ENCODE measurements at regions of chr16 and their contacts with region 1.

Region 1: GRCh38 chr16:2009789-2010510 is at the start of gene ZNF598:
- DNase-seq: peak; percentile 56 to 74
- H3K4me3 ChIP-seq: peak within 1 kb of the TSS; percentile 87 to 96 (median 87)
- H3K27ac ChIP-seq: peak within 1 kb of the TSS; percentile 92 to 97
- H3K4me1 ChIP-seq: peaks cover 9 to 24% of the 10 kb centered on the region in 2 donors
- H3K27me3 ChIP-seq: no peaks in the 10 kb centered on the region
- CTCF ChIP-seq: peak in 1 of 3 donors; percentile 6
- POLR2A ChIP-seq: peak; percentile 77
- total RNA-seq, gene ZNF598: 16.0 to 25.2 (median 22.2) TPM

Region 2: GRCh38 chr16:200388-200787 is 1809.6 kb before region 1 on chr16:
- intact Hi-C with region 1: loop called (anchors 5 kb)
- DNase-seq: no peak
- H3K4me3 ChIP-seq: no peak overlapping the region
- H3K27ac ChIP-seq: no peak overlapping the region
- H3K4me1 ChIP-seq: no peaks in the 10 kb centered on the region
- H3K27me3 ChIP-seq: no peaks in the 10 kb centered on the region
- CTCF ChIP-seq: no peak
- POLR2A ChIP-seq: no peak

Region 3: GRCh38 chr16:1533443-1533951 is 476.5 kb before region 1 on chr16 and contains the start of gene TMEM204:
- intact Hi-C with region 1: no loop called
- DNase-seq: peak in 1 of 2 donors; percentile 57
- H3K4me3 ChIP-seq: peak within 1 kb of the TSS; percentile 68 to 91 (median 72)
- H3K27ac ChIP-seq: peak within 1 kb of the TSS; percentile 84 to 97
- H3K4me1 ChIP-seq: peaks cover 17 to 24% of the 10 kb centered on the region in 2 donors
- H3K27me3 ChIP-seq: no peaks in the 10 kb centered on the region
- CTCF ChIP-seq: no peak
- POLR2A ChIP-seq: no peak
- total RNA-seq, gene TMEM204: 27.8 to 37.0 (median 34.1) TPM

Region 4: GRCh38 chr16:1991948-1992703 is 17.8 kb before region 1 on chr16:
- intact Hi-C with region 1: no loop called
- DNase-seq: peak; percentile 87 to 92
- H3K4me3 ChIP-seq: peak overlapping the region; percentile 30 to 67 (median 48)
- H3K27ac ChIP-seq: peak overlapping the region; percentile 15 to 31
- H3K4me1 ChIP-seq: peaks cover 0 to 15% of the 10 kb centered on the region in 2 donors
- H3K27me3 ChIP-seq: peaks cover 5 to 25% of the 10 kb centered on the region in 2 donors
- CTCF ChIP-seq: no peak
- POLR2A ChIP-seq: no peak

Measured in breast epithelium (tissue), 4 donors.